HAP-1 (cell line): ENCODE measurements at regions of chr9 and their contacts with region 1.

Region 1: GRCh38 chr9:84238652-84239051 is 101.9 kb downstream of the SLC28A3 start:
- DNase-seq: peak; percentile 16 to 36
- H3K4me3 ChIP-seq: no peak overlapping the region
- H3K4me1 ChIP-seq: no peaks in the 10 kb centered on the region
- H3K27me3 ChIP-seq: no peaks in the 10 kb centered on the region

Region 2: DNA sequence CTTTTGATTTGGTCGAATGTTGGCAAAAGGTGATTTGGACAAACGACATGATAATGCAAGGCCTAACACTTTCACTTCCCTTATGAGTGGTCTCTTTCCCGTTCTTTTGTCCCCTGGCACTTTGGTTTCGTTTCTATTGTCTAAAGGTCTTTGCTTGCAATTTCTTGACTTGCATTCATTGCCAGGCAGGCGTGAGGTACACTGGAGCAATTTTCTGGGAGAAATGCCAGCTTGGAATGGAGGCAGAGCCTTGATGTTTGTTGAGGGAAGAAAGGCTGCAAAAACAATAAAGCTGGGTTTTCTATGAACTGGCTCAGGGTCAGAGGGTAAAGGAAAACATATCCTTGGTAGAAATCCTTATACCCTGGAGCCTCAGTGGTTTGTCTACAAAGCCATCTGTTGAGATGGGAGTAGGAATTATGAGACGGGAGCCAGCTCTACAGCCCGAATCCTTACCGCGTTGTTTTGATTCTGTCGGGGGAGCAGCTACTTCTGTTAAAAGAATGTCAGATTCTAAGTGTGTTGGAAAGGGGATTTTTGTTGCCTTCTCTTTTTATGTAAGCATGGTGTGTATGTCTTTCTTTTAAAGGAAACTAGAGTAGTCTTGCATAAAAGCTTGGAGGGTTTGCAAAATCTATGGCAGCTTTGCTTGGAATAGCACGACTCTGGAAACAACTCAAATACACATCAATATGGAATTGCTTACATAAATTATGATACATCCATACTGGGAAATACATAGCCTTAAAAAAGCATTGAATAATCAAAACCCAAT is 99.2 kb before region 1 on chr9:
- in situ Hi-C with region 1: loop called (anchors 25 kb)
- DNase-seq: peak; percentile 80 to 85
- H3K4me3 ChIP-seq: no peak overlapping the region
- H3K4me1 ChIP-seq: peaks cover 19% of the 10 kb centered on the region
- H3K27me3 ChIP-seq: no peaks in the 10 kb centered on the region

Region 3: GRCh38 chr9:84990102-84990815 is 751.6 kb after region 1 on chr9:
- in situ Hi-C with region 1: no loop called
- DNase-seq: no peak
- H3K4me3 ChIP-seq: no peak overlapping the region
- H3K4me1 ChIP-seq: no peaks in the 10 kb centered on the region
- H3K27me3 ChIP-seq: peaks cover 4% of the 10 kb centered on the region; the same call in 1 of the 2 replicates